ENCODE measurements at regions of chr18 and their contacts with region 1.

Region 1: GRCh38 chr18:70082430-70082829 is 123.1 kb downstream of the RTTN start:
- DNase-seq: no peak
- H3K4me3 ChIP-seq: no peak overlapping the region
- H3K4me3 Mint-ChIP-seq: no peak overlapping the region
- H3K27ac ChIP-seq: no peak overlapping the region
- H3K27ac Mint-ChIP-seq: no peak overlapping the region
- H3K4me1 ChIP-seq: no peaks in the 10 kb centered on the region
- H3K4me1 Mint-ChIP-seq: peaks cover 0 to 1% (median 0%) of the 10 kb centered on the region in 4 donors
- H3K27me3 ChIP-seq: no peaks in the 10 kb centered on the region
- H3K27me3 Mint-ChIP-seq: no peaks in the 10 kb centered on the region

Region 2: DNA sequence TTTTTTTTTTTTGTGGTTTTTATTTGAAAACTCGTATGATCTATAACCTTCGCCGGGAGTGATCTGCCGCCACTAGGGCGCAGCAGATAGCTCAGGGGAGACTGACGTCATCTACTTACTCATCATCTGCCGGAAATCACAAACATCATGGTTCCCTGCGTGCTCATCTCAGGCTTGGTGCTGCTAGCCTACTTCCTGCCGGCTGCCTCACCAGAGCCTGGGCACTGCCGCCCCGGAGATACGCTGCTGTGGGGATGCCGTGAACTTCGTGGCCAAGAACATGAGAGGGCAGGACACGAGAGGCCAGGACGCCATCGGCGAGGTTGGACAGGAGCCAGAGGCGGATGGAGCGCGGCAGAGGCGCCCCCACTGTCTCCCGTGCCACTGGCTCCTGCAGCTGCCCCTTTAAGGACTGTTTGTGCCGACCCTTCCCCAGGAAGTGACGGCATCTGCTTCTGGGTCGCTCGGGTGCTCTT is 612.9 kb before region 1 on chr18:
- CTCF ChIA-PET with region 1: no interaction called
- POLR2A ChIA-PET with region 1: no interaction called
- intact Hi-C with region 1: loop called (anchors 1 kb)
- DNase-seq: peak; percentile 23 to 55 (median 41)
- H3K4me3 ChIP-seq: no peak overlapping the region
- H3K4me3 Mint-ChIP-seq: no peak overlapping the region
- H3K27ac ChIP-seq: no peak overlapping the region
- H3K27ac Mint-ChIP-seq: peak overlapping the region in 3 of 7 donors; percentile 46 to 83 (median 51)
- H3K4me1 ChIP-seq: no peaks in the 10 kb centered on the region
- H3K4me1 Mint-ChIP-seq: peaks cover 0 to 14% (median 6%) of the 10 kb centered on the region in 4 donors
- H3K27me3 ChIP-seq: no peaks in the 10 kb centered on the region
- H3K27me3 Mint-ChIP-seq: peaks cover 3% of the 10 kb centered on the region in 2 donors

Region 3: DNA sequence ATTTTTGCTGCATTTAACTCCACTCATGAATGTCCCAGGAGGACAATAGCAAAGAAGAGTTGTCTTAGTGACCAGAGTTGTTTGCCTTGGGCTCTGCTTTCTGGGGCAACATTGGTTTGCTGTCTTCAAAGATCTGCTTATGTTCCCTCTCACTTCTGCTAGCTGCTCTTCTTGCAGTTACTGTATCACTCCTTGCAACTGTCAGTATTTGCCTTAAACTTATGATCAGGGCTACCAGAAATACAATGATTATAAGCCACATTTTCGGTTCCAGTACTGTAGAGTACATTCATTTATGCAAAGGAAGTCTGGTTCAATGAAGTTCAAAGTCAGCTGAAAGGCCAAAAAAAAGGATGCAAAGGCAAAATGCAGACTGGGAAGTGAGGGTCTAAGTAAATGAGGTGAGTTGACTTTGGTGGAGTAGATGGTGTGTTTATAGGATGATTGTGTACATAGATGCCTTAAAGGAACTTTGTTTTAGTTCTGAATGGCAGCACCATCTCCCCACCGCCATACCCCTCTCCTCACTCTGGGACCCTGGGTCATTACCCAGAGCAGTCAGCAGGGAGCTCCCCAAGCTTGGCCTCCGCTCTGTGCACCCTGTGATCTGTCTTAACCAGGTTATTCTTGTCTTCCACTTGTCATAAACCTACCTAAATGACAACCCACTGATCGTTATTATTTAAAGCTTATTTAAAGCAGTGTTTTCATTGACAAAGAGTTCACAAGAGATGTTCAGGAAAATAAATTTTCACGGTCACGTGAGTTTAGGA is 445.7 kb before region 1 on chr18:
- CTCF ChIA-PET with region 1: interaction called, 17 read pairs
- POLR2A ChIA-PET with region 1: no interaction called
- intact Hi-C with region 1: loop called (anchors 1 kb)
- DNase-seq: peak in 4 of 5 donors; percentile 12 to 24 (median 20)
- H3K4me3 ChIP-seq: no peak overlapping the region
- H3K4me3 Mint-ChIP-seq: no peak overlapping the region
- H3K27ac ChIP-seq: no peak overlapping the region
- H3K27ac Mint-ChIP-seq: no peak overlapping the region
- H3K4me1 ChIP-seq: no peaks in the 10 kb centered on the region
- H3K4me1 Mint-ChIP-seq: peaks cover 0 to 5% (median 2%) of the 10 kb centered on the region in 4 donors
- H3K27me3 ChIP-seq: peaks cover under 1% of the 10 kb centered on the region
- H3K27me3 Mint-ChIP-seq: peaks cover 3 to 4% of the 10 kb centered on the region in 2 donors

Region 4: GRCh38 chr18:70116949-70117348 is 34.5 kb after region 1 on chr18:
- CTCF ChIA-PET with region 1: no interaction called
- POLR2A ChIA-PET with region 1: no interaction called
- intact Hi-C with region 1: no loop called
- DNase-seq: no peak
- H3K4me3 ChIP-seq: no peak overlapping the region
- H3K4me3 Mint-ChIP-seq: no peak overlapping the region
- H3K27ac ChIP-seq: no peak overlapping the region
- H3K27ac Mint-ChIP-seq: no peak overlapping the region
- H3K4me1 ChIP-seq: no peaks in the 10 kb centered on the region
- H3K4me1 Mint-ChIP-seq: peaks cover 0 to 11% (median 3%) of the 10 kb centered on the region in 4 donors
- H3K27me3 ChIP-seq: no peaks in the 10 kb centered on the region
- H3K27me3 Mint-ChIP-seq: no peaks in the 10 kb centered on the region

Region 5: GRCh38 chr18:70464343-70465114 is 382.1 kb after region 1 on chr18:
- CTCF ChIA-PET with region 1: no interaction called
- POLR2A ChIA-PET with region 1: no interaction called
- intact Hi-C with region 1: no loop called
- DNase-seq: peak in 4 of 5 donors; percentile 1 to 20 (median 5)
- H3K4me3 ChIP-seq: no peak overlapping the region
- H3K4me3 Mint-ChIP-seq: peak overlapping the region in 7 of 8 donors; percentile 32 to 82 (median 71)
- H3K27ac ChIP-seq: no peak overlapping the region
- H3K27ac Mint-ChIP-seq: peak overlapping the region in 1 of 7 donors; percentile 30
- H3K4me1 ChIP-seq: peaks cover 5% of the 10 kb centered on the region
- H3K4me1 Mint-ChIP-seq: peaks cover 0 to 7% (median 5%) of the 10 kb centered on the region in 4 donors
- H3K27me3 ChIP-seq: peaks cover 3% of the 10 kb centered on the region
- H3K27me3 Mint-ChIP-seq: peaks cover 16 to 18% of the 10 kb centered on the region in 2 donors

Measured in CD4-positive, alpha-beta memory T cell (primary cell).